ENCODE measurements at regions of chr22 and their contacts with region 1.

Region 1: DNA sequence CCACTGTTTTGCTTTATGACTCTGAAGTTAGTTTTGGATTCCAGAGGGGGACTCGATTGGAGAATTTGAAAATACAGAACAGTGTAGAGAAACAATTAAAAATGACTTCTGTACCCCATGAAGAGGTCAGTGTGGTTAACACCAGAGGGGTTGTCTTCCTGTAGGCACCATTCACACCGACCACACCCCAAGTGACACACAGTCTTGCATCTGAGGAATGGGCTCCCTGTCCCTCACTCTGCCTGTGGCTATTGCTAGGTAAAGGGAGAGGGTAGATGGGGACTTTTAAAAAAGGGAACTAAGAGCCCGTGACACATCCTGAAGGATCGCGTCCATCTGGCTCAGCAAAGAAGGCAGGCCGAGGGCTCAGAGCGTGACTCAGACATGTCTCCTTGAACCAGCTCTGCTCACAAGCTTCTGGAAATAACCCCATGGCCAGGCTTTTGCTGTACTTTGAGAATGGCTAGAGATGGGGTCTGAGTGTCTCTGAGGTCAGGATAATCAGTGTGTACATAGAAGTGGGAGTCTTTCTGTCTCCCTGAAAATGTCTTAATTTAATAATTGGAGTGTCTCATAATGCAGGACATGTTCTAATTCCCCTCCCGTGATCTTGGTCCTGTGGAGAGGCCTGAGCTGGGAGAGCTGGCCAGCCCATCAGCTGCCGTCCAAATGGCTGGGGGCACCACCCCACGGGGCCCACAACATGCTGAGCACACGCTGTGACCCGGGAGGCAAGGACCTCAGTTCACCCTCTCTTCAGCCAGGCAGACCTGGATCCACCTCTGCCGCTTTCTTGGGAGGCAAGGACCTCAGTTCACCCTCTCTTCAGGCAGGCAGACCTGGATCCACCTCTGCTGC is 39.3 kb downstream of the SGSM1 start:
- DNase-seq: no peak
- H3K4me3 ChIP-seq: no peak overlapping the region
- H3K27ac ChIP-seq: no peak overlapping the region
- H3K4me1 ChIP-seq: no peaks in the 10 kb centered on the region; a peak in 1 of 4 replicates
- H3K27me3 ChIP-seq: no peaks in the 10 kb centered on the region
- CTCF ChIP-seq: no peak
- EP300 ChIP-seq: no peak
- RAD21 ChIP-seq: no peak

Region 2: DNA sequence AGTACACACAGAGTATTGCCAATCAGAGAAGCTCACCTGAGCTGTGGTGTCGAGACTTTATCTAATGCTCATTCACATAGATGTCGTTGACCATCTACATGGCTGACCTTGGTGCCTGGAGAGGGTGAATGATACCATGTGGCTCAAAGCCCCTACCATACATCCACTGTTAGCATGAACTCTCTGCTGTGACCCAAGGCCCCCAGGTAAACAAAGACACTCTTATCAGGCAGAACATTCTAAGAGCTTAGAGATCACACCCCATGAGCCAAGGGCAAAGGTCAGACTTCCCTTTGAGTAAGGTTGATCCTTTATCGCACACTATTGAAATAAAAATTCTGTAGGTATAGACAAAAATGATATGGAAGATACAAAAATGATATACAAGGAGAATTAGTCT is 55.8 kb before region 1 on chr22:
- CTCF ChIA-PET with region 1: interaction called, 11 read pairs
- POLR2A ChIA-PET with region 1: no interaction called
- DNase-seq: no peak
- H3K4me3 ChIP-seq: no peak overlapping the region
- H3K27ac ChIP-seq: no peak overlapping the region
- H3K4me1 ChIP-seq: no peaks in the 10 kb centered on the region; a peak in 1 of 4 replicates
- H3K27me3 ChIP-seq: no peaks in the 10 kb centered on the region
- CTCF ChIP-seq: no peak
- EP300 ChIP-seq: no peak
- RAD21 ChIP-seq: no peak

Region 3: DNA sequence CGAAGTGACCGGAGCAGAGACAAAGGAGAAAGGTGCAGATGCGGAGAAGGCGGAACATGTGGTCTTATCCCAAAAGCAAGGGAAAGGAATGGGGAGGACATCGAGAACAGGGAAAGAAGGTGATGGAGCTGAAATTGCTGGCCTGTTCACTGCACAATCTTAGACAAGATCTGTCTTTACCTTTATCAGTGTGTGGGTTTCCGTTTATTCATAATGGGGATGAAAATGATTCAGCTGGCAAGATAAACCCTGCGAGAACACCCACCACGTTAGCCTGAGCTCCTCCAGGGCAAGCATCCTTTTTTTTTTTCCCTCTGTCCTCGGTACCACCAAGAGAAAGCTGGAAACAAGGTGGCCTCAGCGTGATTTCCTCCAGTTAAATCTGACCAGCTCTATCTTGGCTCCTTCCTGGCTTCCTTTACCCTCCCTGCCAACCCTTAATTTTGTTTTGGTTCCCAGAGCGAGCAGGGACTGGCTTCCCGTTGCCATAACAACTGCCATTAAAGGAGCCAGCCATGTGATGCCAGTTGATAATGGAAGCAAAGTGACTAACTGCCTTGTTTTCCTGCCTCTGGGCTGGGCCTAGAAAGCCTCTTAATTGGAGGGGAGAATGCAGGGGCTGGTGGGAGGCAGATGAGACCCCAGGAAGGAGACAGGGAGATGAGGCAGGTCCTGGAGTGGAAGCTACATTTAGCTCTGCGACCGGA is 35.1 kb before region 1 on chr22:
- CTCF ChIA-PET with region 1: interaction called, 15 read pairs
- POLR2A ChIA-PET with region 1: no interaction called
- DNase-seq: peak; percentile 73
- H3K4me3 ChIP-seq: no peak overlapping the region; a peak in 1 of 4 replicates
- H3K27ac ChIP-seq: peak overlapping the region in 1 of 2 experiments; percentile 94; a peak in 2 of 4 replicates
- H3K4me1 ChIP-seq: peaks cover 0 to 61% of the 10 kb centered on the region in 2 experiments; a peak in 2 of 4 replicates
- H3K27me3 ChIP-seq: peaks cover 12% of the 10 kb centered on the region; the same call in 1 of the 2 replicates
- CTCF ChIP-seq: no peak
- EP300 ChIP-seq: peak in 1 of 2 experiments; percentile 3; a peak in 1 of 4 replicates
- RAD21 ChIP-seq: no peak

Region 4: GRCh38 chr22:24834845-24835570 is 10.3 kb before region 1 on chr22:
- CTCF ChIA-PET with region 1: interaction called, 20 read pairs
- POLR2A ChIA-PET with region 1: interaction called, 3 read pairs
- DNase-seq: peak; percentile 64
- H3K4me3 ChIP-seq: no peak overlapping the region
- H3K27ac ChIP-seq: no peak overlapping the region
- H3K4me1 ChIP-seq: peaks cover 0 to 12% of the 10 kb centered on the region in 2 experiments; a peak in 1 of 4 replicates
- H3K27me3 ChIP-seq: no peaks in the 10 kb centered on the region
- CTCF ChIP-seq: peak; percentile 34
- EP300 ChIP-seq: no peak
- RAD21 ChIP-seq: peak; percentile 73

Region 5: GRCh38 chr22:24875862-24876506 is 30.7 kb after region 1 on chr22:
- CTCF ChIA-PET with region 1: interaction called, 16 read pairs
- POLR2A ChIA-PET with region 1: no interaction called
- DNase-seq: no peak
- H3K4me3 ChIP-seq: no peak overlapping the region
- H3K27ac ChIP-seq: no peak overlapping the region
- H3K4me1 ChIP-seq: no peaks in the 10 kb centered on the region
- H3K27me3 ChIP-seq: no peaks in the 10 kb centered on the region
- CTCF ChIP-seq: no peak
- EP300 ChIP-seq: no peak
- RAD21 ChIP-seq: no peak

Region 6: DNA sequence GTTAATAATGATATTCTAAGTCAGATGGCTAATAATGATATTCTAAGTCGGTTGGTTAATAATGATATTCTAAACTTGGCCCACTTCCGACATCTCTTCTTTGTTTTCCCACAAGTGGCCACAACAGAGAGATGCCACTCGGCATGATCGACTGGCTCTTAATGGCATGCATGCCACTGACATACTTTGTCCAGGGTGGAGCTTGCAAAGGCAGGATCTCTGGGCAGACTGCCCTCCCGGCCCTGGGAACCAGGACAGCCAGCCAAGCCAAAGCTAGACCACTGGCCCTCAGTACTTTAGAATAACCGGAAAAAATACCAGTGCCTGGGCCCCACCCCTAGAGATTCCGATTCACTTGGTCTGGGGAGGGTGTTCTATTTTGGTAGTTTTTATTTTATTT is 185.4 kb after region 1 on chr22:
- CTCF ChIA-PET with region 1: no interaction called
- POLR2A ChIA-PET with region 1: no interaction called
- DNase-seq: no peak
- H3K4me3 ChIP-seq: no peak overlapping the region
- H3K27ac ChIP-seq: no peak overlapping the region
- H3K4me1 ChIP-seq: peaks cover 2 to 11% of the 10 kb centered on the region in 2 experiments; a peak in 1 of 4 replicates
- H3K27me3 ChIP-seq: no peaks in the 10 kb centered on the region
- CTCF ChIP-seq: no peak
- EP300 ChIP-seq: no peak
- RAD21 ChIP-seq: no peak